H1 (cell line): ENCODE measurements at regions of chr17 and their contacts with region 1.

Region 1: DNA sequence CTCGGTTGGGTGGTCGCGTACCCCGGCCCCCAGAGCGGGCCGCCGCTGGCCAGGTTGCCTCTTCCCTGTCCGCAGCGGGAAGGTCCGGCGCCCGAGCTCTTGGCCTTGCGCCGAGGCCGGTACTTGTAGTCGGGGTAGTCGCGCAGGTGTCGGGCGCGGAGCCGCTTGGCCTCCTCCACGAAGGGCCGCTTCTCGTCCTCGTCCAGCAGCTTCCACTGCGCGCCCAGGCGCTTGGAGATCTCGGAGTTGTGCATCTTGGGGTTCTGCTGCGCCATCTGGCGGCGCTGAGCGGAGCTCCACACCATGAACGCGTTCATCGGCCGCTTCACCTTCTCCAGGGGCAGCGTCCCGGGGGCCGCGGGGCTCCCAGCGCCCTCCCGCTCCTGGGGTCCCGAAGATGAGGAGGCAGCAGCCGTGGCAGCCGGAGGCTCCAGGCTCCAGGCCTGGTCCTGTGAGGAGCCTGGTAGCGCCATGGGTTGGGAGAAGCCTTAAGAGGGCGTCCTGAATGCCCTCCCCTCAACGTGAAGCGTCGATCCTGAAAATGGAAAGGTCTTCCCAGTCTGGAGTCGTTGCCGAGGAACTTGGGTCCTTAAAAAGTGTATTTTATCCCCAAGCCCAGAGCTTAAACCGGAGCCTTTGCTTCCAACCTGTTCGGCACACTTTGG is 558 bp downstream of the SOX15 start:
- DNase-seq: peak in 1 of 2 experiments; percentile 91
- H3K4me3 ChIP-seq: peak overlapping the region; percentile 59 to 73 (median 69)
- H3K27ac ChIP-seq: no peak overlapping the region
- H3K4me1 ChIP-seq: peaks cover 6 to 23% (median 18%) of the 10 kb centered on the region in 4 experiments
- H3K27me3 ChIP-seq: no peaks in the 10 kb centered on the region
- CTCF ChIP-seq: peak; percentile 86 to 92 (median 91)
- EP300 ChIP-seq: no peak
- POLR2A ChIP-seq: peak in 1 of 2 experiments; percentile 59; a peak in 2 of 3 replicates
- RAD21 ChIP-seq: peak; percentile 66 to 83

Region 2: GRCh38 chr17:7224115-7224514 is 365.2 kb before region 1 on chr17:
- CTCF ChIA-PET with region 1: no interaction called
- POLR2A ChIA-PET with region 1: no interaction called
- DNase-seq: no peak
- H3K4me3 ChIP-seq: no peak overlapping the region
- H3K27ac ChIP-seq: no peak overlapping the region
- H3K4me1 ChIP-seq: peaks cover 0 to 10% (median 5%) of the 10 kb centered on the region in 4 experiments; a peak in 4 of 7 replicates
- H3K27me3 ChIP-seq: no peaks in the 10 kb centered on the region
- CTCF ChIP-seq: no peak
- EP300 ChIP-seq: no peak
- POLR2A ChIP-seq: no peak
- RAD21 ChIP-seq: no peak

Region 3: DNA sequence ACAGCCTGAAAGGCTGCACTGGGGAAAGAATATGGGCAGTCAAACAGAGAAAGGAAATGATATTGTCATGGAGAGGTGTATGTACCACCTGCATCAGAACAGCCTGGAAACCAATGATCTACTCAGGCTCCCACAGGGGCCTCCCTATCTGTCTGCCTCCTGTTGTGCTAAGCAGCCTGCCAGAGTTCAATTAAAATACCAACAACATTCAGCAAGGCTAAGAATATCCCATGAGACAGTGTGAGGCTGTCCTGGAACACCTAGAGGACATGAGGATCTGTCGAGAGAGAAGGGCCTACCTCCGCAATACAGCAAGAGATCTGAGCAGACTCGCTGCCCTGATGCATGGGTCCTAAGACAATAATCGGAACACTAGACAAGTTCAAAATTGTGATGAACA is 16.9 kb after region 1 on chr17:
- CTCF ChIA-PET with region 1: interaction called, 12 read pairs
- POLR2A ChIA-PET with region 1: interaction called, 22 read pairs
- DNase-seq: no peak
- H3K4me3 ChIP-seq: no peak overlapping the region
- H3K27ac ChIP-seq: no peak overlapping the region
- H3K4me1 ChIP-seq: no peaks in the 10 kb centered on the region
- H3K27me3 ChIP-seq: no peaks in the 10 kb centered on the region
- CTCF ChIP-seq: no peak
- EP300 ChIP-seq: no peak
- POLR2A ChIP-seq: no peak
- RAD21 ChIP-seq: no peak

Region 4: DNA sequence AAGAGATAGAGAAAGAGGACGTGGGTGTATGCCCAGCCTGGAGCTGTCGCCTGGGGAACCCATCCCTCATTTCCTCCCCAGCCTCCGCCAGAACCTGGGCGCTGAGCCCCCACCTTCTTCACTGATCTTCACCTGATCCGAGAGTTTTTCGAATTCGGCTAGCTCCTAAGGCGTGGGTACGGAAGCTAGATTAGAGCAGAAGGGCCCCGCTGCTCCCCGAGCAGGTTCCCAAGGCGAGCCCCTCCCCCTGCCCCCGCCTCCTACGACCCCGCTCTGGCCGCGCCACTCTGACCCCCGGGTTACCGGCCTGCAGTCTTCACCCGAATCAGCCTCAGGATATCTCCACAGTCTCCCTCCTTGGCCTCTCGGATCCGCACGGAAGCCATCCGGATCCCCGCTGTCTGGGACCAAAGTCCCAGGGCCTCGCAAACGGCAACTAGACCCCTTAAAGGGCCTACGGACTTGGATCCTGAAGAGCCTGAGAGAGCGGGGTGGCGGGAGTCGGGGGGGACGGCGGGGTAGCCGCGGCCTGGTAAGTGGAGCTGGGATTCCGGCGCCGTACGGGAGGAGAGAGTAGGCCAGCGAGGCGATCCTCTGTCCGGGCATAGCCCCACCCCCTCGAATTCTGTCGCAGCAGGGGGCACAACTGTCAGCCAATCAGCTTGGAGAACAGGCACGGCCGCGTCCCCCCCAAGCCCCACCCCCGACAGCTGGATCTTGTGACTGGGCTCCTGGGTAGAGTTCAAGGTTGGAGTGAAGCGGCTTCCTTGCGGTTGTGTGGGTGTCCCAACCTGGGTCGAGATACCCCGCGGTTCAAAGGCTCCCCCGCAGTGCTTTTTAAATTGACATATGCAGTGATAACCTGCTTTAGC is 38.1 kb after region 1 on chr17 and contains the start of gene SAT2:
- CTCF ChIA-PET with region 1: interaction called, 20 read pairs
- POLR2A ChIA-PET with region 1: interaction called, 33 read pairs
- DNase-seq: peak; percentile 87 to 100
- H3K4me3 ChIP-seq: peak within 1 kb of the TSS; percentile 72 to 98 (median 76)
- H3K27ac ChIP-seq: peak within 1 kb of the TSS; percentile 16; the same call in 1 of the 2 replicates
- H3K4me1 ChIP-seq: peaks cover 2 to 10% (median 4%) of the 10 kb centered on the region in 4 experiments; a peak in 5 of 7 replicates
- H3K27me3 ChIP-seq: no peaks in the 10 kb centered on the region
- CTCF ChIP-seq: no peak
- EP300 ChIP-seq: peak in 1 of 2 experiments; percentile 77; a peak in 1 of 3 replicates
- POLR2A ChIP-seq: peak in 1 of 2 experiments; percentile 75; a peak in 2 of 3 replicates
- RAD21 ChIP-seq: no peak
- total RNA-seq, gene SAT2: 72.3 and 75.3 TPM in 2 replicates

Region 5: GRCh38 chr17:7650509-7651096 is 61.3 kb after region 1 on chr17 and contains the start of gene ATP1B2:
- CTCF ChIA-PET with region 1: interaction called, 5 read pairs
- POLR2A ChIA-PET with region 1: interaction called, 13 read pairs
- DNase-seq: peak; percentile 72 to 90
- H3K4me3 ChIP-seq: peak within 1 kb of the TSS; percentile 43 to 87 (median 63)
- H3K27ac ChIP-seq: no peak within 1 kb of the TSS
- H3K4me1 ChIP-seq: peaks cover 0 to 12% (median 8%) of the 10 kb centered on the region in 4 experiments; a peak in 5 of 7 replicates
- H3K27me3 ChIP-seq: peaks cover 0 to 13% (median 4%) of the 10 kb centered on the region in 4 experiments; a peak in 4 of 7 replicates
- CTCF ChIP-seq: no peak
- EP300 ChIP-seq: no peak
- POLR2A ChIP-seq: peak in 1 of 2 experiments; percentile 81; a peak in 2 of 3 replicates
- RAD21 ChIP-seq: no peak
- total RNA-seq, gene ATP1B2: 19.8 and 21.0 TPM in 2 replicates

Region 6: GRCh38 chr17:7673239-7673638 is 83.9 kb after region 1 on chr17:
- CTCF ChIA-PET with region 1: interaction called, 13 read pairs
- POLR2A ChIA-PET with region 1: interaction called, 36 read pairs
- DNase-seq: peak in 1 of 2 experiments; percentile 89
- H3K4me3 ChIP-seq: no peak overlapping the region
- H3K27ac ChIP-seq: no peak overlapping the region
- H3K4me1 ChIP-seq: peaks cover 5 to 15% (median 10%) of the 10 kb centered on the region in 4 experiments
- H3K27me3 ChIP-seq: no peaks in the 10 kb centered on the region
- CTCF ChIP-seq: peak in 2 of 3 experiments; percentile 66 to 74; a peak in 3 of 4 replicates
- EP300 ChIP-seq: no peak
- POLR2A ChIP-seq: no peak
- RAD21 ChIP-seq: peak; percentile 79 to 85

Region 7: DNA sequence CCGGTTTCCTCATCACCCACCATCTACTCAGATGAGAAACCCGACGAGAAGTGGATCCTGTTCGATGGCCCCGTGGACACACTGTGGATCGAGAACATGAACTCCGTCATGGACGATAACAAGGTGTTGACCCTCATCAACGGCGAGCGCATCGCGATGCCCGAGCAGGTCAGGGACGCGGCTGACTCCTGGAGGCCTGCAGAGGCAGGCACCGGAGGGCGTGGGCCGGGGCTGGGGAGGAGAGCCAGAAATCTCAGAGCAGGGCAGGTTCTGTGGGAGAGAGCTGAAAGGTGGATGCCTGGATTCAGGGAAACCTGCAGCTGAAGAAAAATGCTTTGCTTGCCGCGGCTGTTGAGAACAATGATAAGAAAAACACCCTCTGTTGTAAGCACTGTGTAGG is 197.5 kb after region 1 on chr17:
- CTCF ChIA-PET with region 1: no interaction called
- POLR2A ChIA-PET with region 1: no interaction called
- DNase-seq: no peak
- H3K4me3 ChIP-seq: no peak overlapping the region
- H3K27ac ChIP-seq: no peak overlapping the region
- H3K4me1 ChIP-seq: no peaks in the 10 kb centered on the region
- H3K27me3 ChIP-seq: no peaks in the 10 kb centered on the region; a peak in 4 of 7 replicates
- CTCF ChIP-seq: no peak
- EP300 ChIP-seq: no peak
- POLR2A ChIP-seq: no peak
- RAD21 ChIP-seq: no peak